ENCODE measurements at regions of chr12 and their contacts with region 1.

Region 1: GRCh38 chr12:10320643-10321042 is 13.0 kb downstream of the KLRD1 start:
- DNase-seq: no peak
- ATAC-seq: no peak
- H3K4me3 ChIP-seq: no peak overlapping the region
- H3K27ac ChIP-seq: no peak overlapping the region
- H3K4me1 ChIP-seq: no peaks in the 10 kb centered on the region
- H3K27me3 ChIP-seq: no peaks in the 10 kb centered on the region
- CTCF ChIP-seq: no peak

Region 2: DNA sequence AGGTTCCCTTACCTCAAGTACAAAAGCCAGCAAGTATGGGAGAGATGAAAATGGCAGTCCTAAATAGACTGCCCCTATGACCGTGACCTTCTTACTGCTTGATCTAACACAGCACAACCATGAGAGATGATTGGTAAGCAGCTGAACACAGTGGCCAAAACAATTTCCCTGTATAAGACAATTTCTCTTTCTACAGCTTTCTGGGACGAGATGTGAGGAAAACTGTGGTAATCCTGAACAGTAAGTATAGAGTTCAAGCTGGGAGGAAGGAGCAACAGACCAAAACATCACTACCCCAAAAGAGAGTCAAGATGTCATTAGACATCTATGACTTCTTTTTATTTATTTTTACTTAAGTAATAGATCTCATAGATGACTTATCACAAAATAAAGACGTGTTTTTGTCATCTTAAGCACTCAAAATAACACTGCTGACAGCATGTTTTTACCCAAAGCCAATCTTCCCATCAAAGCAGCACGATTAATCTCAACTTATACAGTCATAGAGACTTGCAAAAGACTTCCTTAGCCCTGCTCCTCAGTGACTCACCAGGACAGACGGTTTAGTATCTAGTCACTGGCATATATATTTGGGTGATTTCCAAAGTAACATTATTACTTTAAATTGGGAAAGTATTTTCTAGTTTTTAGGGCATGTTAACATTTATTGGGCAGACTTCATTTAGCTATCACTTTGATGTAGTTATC is 138.1 kb before region 1 on chr12:
- CTCF ChIA-PET with region 1: no interaction called
- POLR2A ChIA-PET with region 1: interaction called, 10 read pairs
- intact Hi-C with region 1: no loop called
- DNase-seq: peak; percentile 63
- ATAC-seq: peak; percentile 76
- H3K4me3 ChIP-seq: no peak overlapping the region
- H3K27ac ChIP-seq: peak overlapping the region; percentile 16; the same call in 1 of the 2 replicates
- H3K4me1 ChIP-seq: peaks cover 32% of the 10 kb centered on the region
- H3K27me3 ChIP-seq: no peaks in the 10 kb centered on the region
- CTCF ChIP-seq: no peak

Region 3: DNA sequence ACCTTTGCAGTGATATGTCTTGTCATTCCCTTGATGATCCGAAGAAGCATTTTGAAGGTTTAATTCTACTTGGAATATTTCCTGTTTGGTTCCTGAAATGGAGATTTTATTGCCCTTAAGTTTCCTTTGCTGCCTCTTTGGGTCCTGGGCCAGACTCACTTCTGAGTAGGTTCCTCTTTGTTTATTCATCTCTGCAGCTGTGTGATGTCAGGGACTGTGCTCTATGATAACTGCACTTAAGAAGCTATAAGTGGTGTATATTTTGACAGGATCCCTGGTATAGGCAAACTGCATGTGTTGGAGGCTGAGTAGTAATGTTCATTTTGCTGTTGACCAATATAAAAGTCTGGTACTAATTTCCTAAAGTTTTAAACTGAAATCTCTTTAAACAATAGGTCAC is 88.7 kb after region 1 on chr12 and contains the start of gene KLRC4:
- CTCF ChIA-PET with region 1: no interaction called
- POLR2A ChIA-PET with region 1: no interaction called
- intact Hi-C with region 1: no loop called
- DNase-seq: no peak
- ATAC-seq: peak; percentile 33
- H3K4me3 ChIP-seq: no peak within 1 kb of the TSS
- H3K27ac ChIP-seq: no peak within 1 kb of the TSS
- H3K4me1 ChIP-seq: peaks cover 3% of the 10 kb centered on the region; the same call in 1 of the 2 replicates
- H3K27me3 ChIP-seq: no peaks in the 10 kb centered on the region
- CTCF ChIP-seq: no peak
- total RNA-seq, gene KLRC4: not detected in 2 replicates

Measured in PC-3 (cell line).